CD14-positive monocyte (primary cell): ENCODE measurements at regions of chr11 and their contacts with region 1.

Region 1: GRCh38 chr11:43879789-43880639 is 617 bp upstream of the ALKBH3 start:
- DNase-seq: no peak
- H3K4me3 ChIP-seq: peak overlapping the region; percentile 80 to 91 (median 85)
- H3K4me3 Mint-ChIP-seq: peak overlapping the region; percentile 90 to 95
- H3K27ac ChIP-seq: peak overlapping the region in 1 of 2 donors; percentile 83
- H3K27ac Mint-ChIP-seq: peak overlapping the region in 6 of 7 donors; percentile 47 to 94 (median 88)
- H3K4me1 ChIP-seq: peaks cover 14 to 19% of the 10 kb centered on the region in 2 donors
- H3K4me1 Mint-ChIP-seq: peaks cover 17% of the 10 kb centered on the region
- H3K27me3 ChIP-seq: peaks cover 20 to 29% of the 10 kb centered on the region in 2 donors
- H3K27me3 Mint-ChIP-seq: peaks cover 15 to 30% (median 26%) of the 10 kb centered on the region in 3 donors
- CTCF ChIP-seq: no peak

Region 2: DNA sequence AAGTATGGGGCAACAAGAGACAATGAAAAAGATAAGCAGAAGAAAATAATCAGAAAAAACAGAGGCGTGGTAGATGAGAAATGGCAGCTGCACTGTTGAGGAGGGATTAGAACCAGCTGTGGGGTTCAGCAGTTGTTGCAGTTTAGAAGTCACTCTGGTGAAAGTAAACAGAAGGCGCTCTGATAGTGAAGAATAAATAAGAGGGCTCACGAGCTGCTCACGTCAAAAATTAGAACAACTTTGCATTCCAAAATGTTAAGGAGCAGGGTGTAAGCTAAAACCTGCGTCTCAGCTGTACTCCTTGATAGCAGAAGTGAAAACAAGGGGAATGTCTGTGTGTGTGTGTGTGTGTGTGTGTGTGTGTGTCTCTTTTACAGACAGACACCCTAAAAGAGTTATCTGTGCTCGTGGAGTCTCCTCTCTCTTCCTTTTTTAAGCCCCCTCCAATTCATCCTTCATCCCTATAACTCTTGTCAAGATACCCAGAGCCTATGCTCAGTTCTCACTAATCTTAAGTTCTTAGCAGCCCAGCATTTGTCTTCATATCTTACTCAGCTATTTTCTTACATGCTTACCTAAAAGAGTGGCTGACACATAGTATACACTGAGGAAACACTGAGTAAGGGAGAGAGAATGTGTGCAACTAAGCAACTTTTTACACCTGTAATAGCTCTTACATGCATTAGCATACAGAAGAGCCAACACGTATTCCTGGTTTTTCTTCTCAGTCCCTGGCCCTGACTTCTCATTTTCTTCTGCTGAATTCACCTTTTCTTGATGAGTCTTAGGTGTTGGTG is 512.4 kb before region 1 on chr11:
- intact Hi-C with region 1: loop called in 1 of 2 experiments (anchors 10 kb)
- DNase-seq: no peak
- H3K4me3 ChIP-seq: no peak overlapping the region
- H3K4me3 Mint-ChIP-seq: no peak overlapping the region
- H3K27ac ChIP-seq: no peak overlapping the region
- H3K27ac Mint-ChIP-seq: peak overlapping the region in 1 of 7 donors; percentile 17
- H3K4me1 ChIP-seq: no peaks in the 10 kb centered on the region
- H3K4me1 Mint-ChIP-seq: peaks cover 12% of the 10 kb centered on the region
- H3K27me3 ChIP-seq: no peaks in the 10 kb centered on the region
- H3K27me3 Mint-ChIP-seq: peaks cover 0 to 2% (median 0%) of the 10 kb centered on the region in 3 donors
- CTCF ChIP-seq: no peak

Region 3: GRCh38 chr11:43819926-43820325 is 60.1 kb before region 1 on chr11:
- intact Hi-C with region 1: no loop called
- DNase-seq: no peak
- H3K4me3 ChIP-seq: no peak overlapping the region
- H3K4me3 Mint-ChIP-seq: no peak overlapping the region
- H3K27ac ChIP-seq: no peak overlapping the region
- H3K27ac Mint-ChIP-seq: no peak overlapping the region
- H3K4me1 ChIP-seq: no peaks in the 10 kb centered on the region
- H3K4me1 Mint-ChIP-seq: no peaks in the 10 kb centered on the region
- H3K27me3 ChIP-seq: no peaks in the 10 kb centered on the region
- H3K27me3 Mint-ChIP-seq: no peaks in the 10 kb centered on the region
- CTCF ChIP-seq: no peak